ENCODE measurements at regions of chr9 and their contacts with region 1.

Region 1: GRCh38 chr9:98944057-98944733 is 488 bp downstream of the COL15A1 start:
- DNase-seq: peak in 3 of 5 donors; percentile 44 to 68 (median 61)
- ATAC-seq: peak in 3 of 4 donors; percentile 54 to 59 (median 57)
- H3K4me3 ChIP-seq: peak overlapping the region; percentile 46 to 89 (median 76)
- H3K27ac ChIP-seq: peak overlapping the region; percentile 24 to 93 (median 84)
- H3K4me1 ChIP-seq: peaks cover 3 to 61% (median 29%) of the 10 kb centered on the region in 12 donors
- H3K27me3 ChIP-seq: peaks cover 0 to 44% (median 0%) of the 10 kb centered on the region in 9 donors
- CTCF ChIP-seq: no peak
- POLR2A ChIP-seq: no peak

Region 2: GRCh38 chr9:98887918-98888510 is 56.2 kb before region 1 on chr9:
- intact Hi-C with region 1: loop called in 1 of 10 experiments (anchors 5 kb)
- DNase-seq: no peak
- ATAC-seq: no peak
- H3K4me3 ChIP-seq: no peak overlapping the region
- H3K27ac ChIP-seq: peak overlapping the region in 9 of 12 donors; percentile 8 to 82 (median 70)
- H3K4me1 ChIP-seq: peaks cover 0 to 80% (median 52%) of the 10 kb centered on the region in 12 donors
- H3K27me3 ChIP-seq: no peaks in the 10 kb centered on the region
- CTCF ChIP-seq: no peak
- POLR2A ChIP-seq: no peak

Region 3: GRCh38 chr9:99266255-99267023 is 322.2 kb after region 1 on chr9:
- intact Hi-C with region 1: no loop called
- DNase-seq: peak; percentile 63 to 79 (median 66)
- ATAC-seq: peak; percentile 55 to 88 (median 82)
- H3K4me3 ChIP-seq: no peak overlapping the region
- H3K27ac ChIP-seq: no peak overlapping the region
- H3K4me1 ChIP-seq: peaks cover 0 to 10% (median 2%) of the 10 kb centered on the region in 12 donors
- H3K27me3 ChIP-seq: no peaks in the 10 kb centered on the region
- CTCF ChIP-seq: peak; percentile 65 to 90 (median 78)
- POLR2A ChIP-seq: no peak